ENCODE measurements at regions of chr3 and their contacts with region 1.

Region 1: DNA sequence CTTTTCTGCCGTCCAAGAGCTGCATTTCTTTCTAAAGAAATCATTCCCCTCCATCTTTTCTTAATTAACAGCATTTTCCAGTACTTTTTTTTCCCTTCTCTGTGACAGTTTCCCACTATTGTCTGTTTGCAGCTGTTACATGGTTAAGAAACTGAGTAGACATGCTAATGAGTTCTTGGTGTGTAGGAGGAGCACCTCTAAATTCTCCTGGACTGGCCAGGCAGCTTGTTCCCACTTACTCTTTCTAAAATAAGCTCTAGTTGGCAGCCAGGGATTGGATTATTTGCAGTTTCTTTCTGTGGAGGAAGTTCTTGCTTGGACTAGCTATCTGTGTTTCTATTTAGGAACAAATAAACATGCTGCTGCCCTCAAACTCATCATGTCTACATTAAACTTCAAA is 235.1 kb upstream of the GAP43 start:
- DNase-seq: peak in 1 of 2 donors; percentile 29
- ATAC-seq: peak; percentile 77 to 95 (median 87)
- H3K4me3 ChIP-seq: no peak overlapping the region
- H3K27ac ChIP-seq: peak overlapping the region in 9 of 10 donors; percentile 20 to 80 (median 54)
- H3K4me1 ChIP-seq: peaks cover 0 to 19% (median 13%) of the 10 kb centered on the region in 9 donors
- H3K27me3 ChIP-seq: no peaks in the 10 kb centered on the region
- CTCF ChIP-seq: no peak

Region 2: DNA sequence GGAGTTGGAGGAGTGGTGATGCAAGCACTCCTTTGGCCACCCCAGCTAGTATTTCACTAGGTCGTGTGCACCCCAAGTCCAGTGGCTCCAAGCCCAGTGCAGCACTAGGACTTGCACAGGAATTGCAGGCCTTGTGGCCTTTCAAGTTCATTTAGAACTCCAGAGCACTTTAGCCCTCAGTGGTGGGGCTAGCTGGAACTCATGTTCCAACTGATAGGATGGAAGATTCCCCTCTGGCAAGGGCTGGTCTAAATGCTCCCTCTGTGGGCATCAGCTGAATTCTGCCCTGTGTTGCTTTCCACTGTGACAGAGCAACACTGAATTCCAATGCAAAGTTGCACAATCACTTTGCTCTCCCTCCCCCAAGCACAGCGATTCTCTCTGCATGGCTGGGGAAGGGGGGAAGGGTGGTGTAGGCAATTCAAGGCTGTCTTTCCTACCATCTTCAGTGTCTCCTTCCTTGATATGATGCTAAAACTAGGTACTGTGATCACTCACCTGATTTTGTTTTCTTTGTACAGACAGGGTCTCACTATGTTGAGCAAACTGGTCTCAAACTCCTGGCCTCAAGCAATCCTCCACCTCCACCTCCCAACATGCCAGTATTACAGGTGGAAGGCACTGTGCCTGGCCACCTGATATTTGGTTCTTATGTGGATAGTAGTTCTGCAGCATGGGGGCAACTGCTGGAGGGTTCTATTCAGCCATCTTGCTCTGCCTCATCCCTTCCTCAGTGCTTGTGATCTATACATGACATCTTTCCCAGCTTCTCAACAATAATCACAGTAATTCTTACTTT is 1702.0 kb before region 1 on chr3:
- intact Hi-C with region 1: no loop called
- DNase-seq: no peak
- ATAC-seq: peak in 5 of 8 donors; percentile 30 to 69 (median 63)
- H3K4me3 ChIP-seq: no peak overlapping the region
- H3K27ac ChIP-seq: peak overlapping the region in 2 of 10 donors; percentile 5 to 10
- H3K4me1 ChIP-seq: peaks cover 0 to 12% (median 6%) of the 10 kb centered on the region in 9 donors
- H3K27me3 ChIP-seq: no peaks in the 10 kb centered on the region
- CTCF ChIP-seq: no peak

Region 3: DNA sequence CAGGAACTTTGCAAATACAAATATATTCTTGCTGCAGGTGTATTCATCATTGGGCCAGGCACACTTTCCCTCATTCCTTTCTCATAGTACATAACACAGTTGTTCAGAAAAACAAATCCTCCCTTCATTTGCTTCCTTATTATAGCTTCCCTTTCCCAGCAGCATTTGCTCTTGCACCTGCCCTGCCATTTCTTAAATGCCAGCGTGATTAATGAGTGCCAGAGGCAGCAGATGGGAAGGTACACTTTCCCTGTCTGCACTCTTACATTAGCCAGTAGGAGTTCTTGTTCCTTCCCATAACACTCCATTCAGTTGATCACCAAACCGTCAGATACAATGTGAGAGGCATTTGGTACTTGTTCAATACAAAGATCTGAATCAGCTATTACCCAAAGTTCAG is 106.7 kb after region 1 on chr3:
- intact Hi-C with region 1: loop called in 1 of 10 experiments (anchors 10 kb)
- DNase-seq: no peak
- ATAC-seq: no peak
- H3K4me3 ChIP-seq: no peak overlapping the region
- H3K27ac ChIP-seq: no peak overlapping the region
- H3K4me1 ChIP-seq: peaks cover 0 to 12% (median 8%) of the 10 kb centered on the region in 9 donors
- H3K27me3 ChIP-seq: no peaks in the 10 kb centered on the region
- CTCF ChIP-seq: no peak

Measured in heart right ventricle (tissue), 16 donors.